ENCODE measurements at regions of chr10 and their contacts with region 1.

Region 1: GRCh38 chr10:15571575-15571974 is 148.1 kb downstream of the ITGA8 start:
- DNase-seq: no peak
- H3K4me3 ChIP-seq: no peak overlapping the region
- H3K27me3 ChIP-seq: no peaks in the 10 kb centered on the region
- CTCF ChIP-seq: no peak

Region 2: DNA sequence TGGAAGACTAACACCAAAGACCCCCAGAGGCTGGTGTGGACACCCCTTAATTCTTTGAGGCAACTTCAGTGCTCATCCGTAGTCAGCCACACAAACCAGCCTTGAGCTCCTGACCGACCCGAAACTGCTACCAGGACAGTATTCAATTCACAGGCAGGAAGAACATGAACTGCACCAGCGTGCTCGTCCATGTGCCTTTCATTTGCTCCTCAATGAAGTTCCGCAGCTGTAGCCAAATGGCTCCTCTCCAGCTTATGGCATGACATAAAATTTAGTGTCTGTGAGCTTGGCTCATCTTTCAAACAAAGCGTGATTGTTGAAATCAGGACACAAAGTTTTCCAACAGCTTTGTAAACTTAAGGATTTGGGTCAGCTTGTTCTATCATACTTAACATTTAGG is 56.4 kb before region 1 on chr10:
- CTCF ChIA-PET with region 1: no interaction called
- POLR2A ChIA-PET with region 1: no interaction called
- DNase-seq: peak; percentile 20
- H3K4me3 ChIP-seq: no peak overlapping the region
- H3K27me3 ChIP-seq: peaks cover 1% of the 10 kb centered on the region
- CTCF ChIP-seq: no peak

Region 3: GRCh38 chr10:15531927-15532722 is 39.5 kb before region 1 on chr10:
- CTCF ChIA-PET with region 1: no interaction called
- POLR2A ChIA-PET with region 1: no interaction called
- DNase-seq: no peak
- H3K4me3 ChIP-seq: no peak overlapping the region
- H3K27me3 ChIP-seq: no peaks in the 10 kb centered on the region; the same call in 1 of the 2 replicates
- CTCF ChIP-seq: no peak

Region 4: DNA sequence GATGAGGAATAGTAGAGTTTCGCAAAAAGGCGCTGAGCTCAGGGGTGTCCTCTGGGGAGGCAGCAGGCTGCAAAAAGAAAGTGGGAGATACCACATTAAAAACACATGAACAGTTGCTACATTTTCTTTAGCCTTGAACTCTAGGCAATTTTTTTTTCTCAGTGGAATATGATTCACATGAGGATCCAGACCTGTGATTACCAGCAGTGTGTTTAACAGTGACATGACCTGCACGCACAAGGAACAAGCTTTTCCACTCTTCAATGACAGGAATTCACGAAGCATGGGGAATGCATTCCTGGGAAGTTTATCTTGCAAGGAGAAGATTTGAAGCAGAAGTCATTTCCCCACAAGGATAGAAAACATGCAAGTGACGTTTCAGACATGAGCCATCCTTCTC is 13.4 kb before region 1 on chr10:
- CTCF ChIA-PET with region 1: no interaction called
- POLR2A ChIA-PET with region 1: no interaction called
- DNase-seq: peak; percentile 92
- H3K4me3 ChIP-seq: no peak overlapping the region
- H3K27me3 ChIP-seq: no peaks in the 10 kb centered on the region
- CTCF ChIP-seq: no peak

Region 5: DNA sequence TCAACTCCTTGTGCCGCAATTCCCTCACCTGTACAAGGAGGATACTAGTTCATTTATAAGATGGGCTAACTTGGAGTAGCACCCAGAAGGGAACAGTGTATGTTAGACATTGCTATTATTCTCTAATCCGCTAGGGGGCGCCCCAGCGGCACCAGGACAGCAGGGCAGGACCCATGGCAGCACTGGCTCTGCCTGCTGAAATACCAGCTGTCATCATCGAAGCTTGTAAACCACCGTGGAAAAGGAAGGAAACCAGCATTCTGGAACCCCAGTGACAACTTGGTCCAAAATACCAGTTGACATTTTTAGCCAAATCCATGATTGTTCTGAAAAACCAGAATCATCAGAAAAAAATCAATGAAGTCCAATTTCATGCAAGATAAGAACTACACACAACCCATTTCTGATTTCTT is 13.7 kb after region 1 on chr10:
- CTCF ChIA-PET with region 1: interaction called, 18 read pairs
- POLR2A ChIA-PET with region 1: no interaction called
- DNase-seq: no peak
- H3K4me3 ChIP-seq: no peak overlapping the region
- H3K27me3 ChIP-seq: no peaks in the 10 kb centered on the region
- CTCF ChIP-seq: peak; percentile 86

Region 6: DNA sequence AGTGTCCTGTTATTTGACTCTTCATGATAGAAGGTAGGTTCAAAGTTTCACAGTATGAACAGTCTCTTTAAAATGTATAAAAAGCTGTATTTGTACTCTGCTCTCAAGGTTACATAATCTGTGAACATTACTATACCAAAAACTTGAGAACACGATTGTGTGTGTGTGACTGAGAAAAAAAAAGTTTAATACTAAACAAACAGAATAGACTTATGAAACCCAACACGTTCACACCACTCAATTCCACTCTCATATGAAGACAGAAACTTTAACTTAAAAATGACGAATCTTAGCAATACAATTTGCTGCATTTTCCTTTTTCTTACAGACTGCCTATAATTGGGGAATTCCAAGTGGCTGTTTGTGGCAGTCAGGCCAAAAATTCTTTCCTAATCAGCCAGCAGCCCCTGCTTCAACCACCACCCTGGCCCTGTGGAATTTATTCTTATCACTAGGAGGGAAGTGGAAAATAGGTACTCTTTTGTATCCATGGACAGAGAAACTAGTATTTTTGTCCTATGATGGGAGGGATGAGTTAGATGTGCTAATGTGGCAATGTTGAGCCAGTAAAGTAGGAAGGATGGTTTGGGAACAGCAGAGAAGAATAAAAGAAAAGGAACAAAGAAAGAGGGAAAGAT is 246.0 kb after region 1 on chr10:
- CTCF ChIA-PET with region 1: no interaction called
- POLR2A ChIA-PET with region 1: no interaction called
- DNase-seq: no peak
- H3K4me3 ChIP-seq: no peak overlapping the region
- H3K27me3 ChIP-seq: no peaks in the 10 kb centered on the region
- CTCF ChIP-seq: no peak